ENCODE measurements at regions of chr3 and their contacts with region 1.

Region 1: GRCh38 chr3:14847613-14848541 is 29.1 kb downstream of the FGD5 start:
- DNase-seq: peak; percentile 84

Region 2: DNA sequence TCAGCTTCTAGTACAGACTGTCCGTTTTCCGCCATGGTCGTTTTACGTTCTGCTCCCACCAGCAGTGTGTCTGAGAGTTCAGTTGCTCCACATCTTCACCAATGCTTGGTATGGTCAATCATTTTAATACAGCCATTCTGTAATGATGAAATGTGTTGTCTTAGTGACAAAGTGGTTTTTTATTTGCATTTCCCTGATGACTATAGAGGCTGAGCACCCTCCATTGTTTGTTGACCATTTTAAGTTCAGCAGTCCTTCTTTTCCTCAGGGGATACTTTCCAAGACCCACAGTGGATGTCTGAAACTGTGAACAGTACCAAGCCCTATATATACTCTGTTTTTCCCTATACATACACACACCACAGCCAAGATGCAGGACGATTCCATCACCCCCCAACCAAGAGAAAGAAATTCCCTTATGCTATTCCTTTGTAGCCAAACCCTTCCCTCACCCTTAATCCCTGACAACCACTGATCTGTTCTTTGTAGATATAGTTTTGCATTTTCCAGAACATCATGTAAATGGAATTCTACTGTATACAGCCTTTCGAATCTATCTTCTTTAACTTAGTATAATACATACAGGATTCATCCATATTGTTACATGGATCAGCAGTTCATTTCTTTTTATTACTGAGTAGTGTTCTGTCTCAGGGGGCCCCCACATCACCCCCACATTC is 117.0 kb before region 1 on chr3:
- intact Hi-C with region 1: no loop called
- DNase-seq: no peak

Region 3: GRCh38 chr3:14836049-14836468 is 11.8 kb before region 1 on chr3:
- intact Hi-C with region 1: no loop called
- DNase-seq: peak; percentile 80

Region 4: GRCh38 chr3:14907043-14907966 is 59.4 kb after region 1 on chr3:
- intact Hi-C with region 1: loop called (anchors 5 kb)
- DNase-seq: no peak

Region 5: GRCh38 chr3:14947886-14948555 is 100.1 kb after region 1 on chr3:
- intact Hi-C with region 1: no loop called
- DNase-seq: peak; percentile 99